ENCODE measurements at regions of chr5 and their contacts with region 1.

Region 1: DNA sequence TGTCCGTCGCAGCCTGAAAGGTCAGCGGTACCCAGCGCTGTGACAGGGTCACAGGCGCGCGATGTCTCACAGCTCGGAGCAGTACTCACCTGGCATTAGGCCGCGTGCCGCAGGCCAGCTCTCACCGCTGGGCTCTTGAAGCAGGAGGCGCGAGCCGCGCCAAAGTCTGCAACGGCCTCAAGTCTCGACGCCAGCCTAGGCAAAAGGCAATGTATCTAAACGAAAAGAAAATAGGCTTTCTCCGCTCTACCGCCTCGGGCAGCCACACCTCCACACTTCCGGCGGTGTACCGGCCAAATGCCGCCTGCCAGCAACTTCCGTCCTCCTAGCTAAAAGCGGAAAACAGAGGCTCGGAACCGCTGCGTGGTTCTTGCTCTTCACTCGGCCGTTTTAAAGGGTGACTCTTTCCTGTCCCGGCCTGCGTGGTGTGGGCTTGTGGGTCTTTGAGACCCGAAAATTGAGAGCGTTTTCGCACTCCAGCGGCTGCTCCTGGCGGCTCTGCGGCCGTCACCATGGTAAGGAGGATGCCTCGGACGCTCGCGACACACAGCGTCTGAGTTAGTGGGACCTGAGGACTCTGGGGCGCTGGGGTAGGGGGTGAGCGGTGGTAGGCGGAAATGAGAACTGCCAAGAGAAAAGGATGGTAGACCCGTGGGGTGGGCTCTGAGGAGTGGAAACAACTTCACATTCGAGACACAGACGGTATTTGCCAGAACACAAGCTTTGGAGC is at the starts of genes GFM2 and NSA2:
- DNase-seq: peak; percentile 96
- ATAC-seq: peak; percentile 91
- H3K4me3 Mint-ChIP-seq: peak within 1 kb of the TSS; percentile 98
- H3K27ac Mint-ChIP-seq: peak within 1 kb of the TSS; percentile 99
- H3K4me1 Mint-ChIP-seq: peaks cover 40% of the 10 kb centered on the region
- H3K27me3 Mint-ChIP-seq: no peaks in the 10 kb centered on the region
- CTCF ChIP-seq: no peak
- total RNA-seq, gene GFM2: 30.1 to 30.5 TPM
- total RNA-seq, gene NSA2: 129 to 142 TPM

Region 2: DNA sequence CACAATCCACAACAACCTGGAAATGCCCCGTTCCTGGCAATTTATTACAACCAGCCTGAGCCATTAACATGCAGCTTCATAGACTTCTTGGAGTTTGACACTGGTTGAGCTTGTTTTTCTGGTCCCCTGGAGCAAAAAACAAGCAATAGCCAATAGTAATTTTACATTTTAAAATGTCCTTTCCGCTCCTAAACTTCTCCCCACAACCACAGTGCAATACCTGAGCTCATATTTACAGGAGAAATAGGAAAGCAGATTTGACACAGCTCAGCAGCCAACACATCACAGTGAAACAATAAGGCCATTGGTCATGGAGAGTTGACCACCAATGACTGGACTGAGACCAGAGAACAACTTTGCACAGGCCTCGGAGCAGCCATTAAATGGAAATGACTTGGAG is 199.6 kb before region 1 on chr5:
- CTCF ChIA-PET with region 1: no interaction called
- POLR2A ChIA-PET with region 1: no interaction called
- intact Hi-C with region 1: no loop called
- DNase-seq: no peak
- ATAC-seq: no peak
- H3K4me3 Mint-ChIP-seq: no peak overlapping the region
- H3K27ac Mint-ChIP-seq: no peak overlapping the region
- H3K4me1 Mint-ChIP-seq: no peaks in the 10 kb centered on the region
- H3K27me3 Mint-ChIP-seq: no peaks in the 10 kb centered on the region
- CTCF ChIP-seq: no peak

Region 3: DNA sequence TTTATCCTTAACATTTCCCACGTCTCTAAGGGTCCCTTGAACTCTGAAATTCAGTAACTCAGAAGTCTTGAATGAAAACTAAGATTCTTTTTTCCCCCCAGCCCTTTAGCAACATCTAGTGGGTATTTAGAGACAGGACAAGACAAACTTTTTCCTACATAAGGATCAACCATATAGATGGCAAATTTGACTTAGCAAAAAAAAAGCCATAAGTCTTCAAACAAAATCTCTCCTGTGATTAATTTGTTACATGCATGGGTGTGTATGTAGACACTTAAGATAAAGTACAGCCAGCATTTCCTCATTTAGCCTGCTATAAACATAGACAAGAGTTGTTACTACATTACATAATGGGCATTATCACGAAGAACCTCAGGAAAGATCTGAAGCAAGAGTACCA is 498.7 kb after region 1 on chr5:
- CTCF ChIA-PET with region 1: interaction called, 3 read pairs
- POLR2A ChIA-PET with region 1: no interaction called
- intact Hi-C with region 1: loop called (anchors 10 kb)
- DNase-seq: no peak
- ATAC-seq: peak; percentile 42
- H3K4me3 Mint-ChIP-seq: no peak overlapping the region
- H3K27ac Mint-ChIP-seq: no peak overlapping the region
- H3K4me1 Mint-ChIP-seq: no peaks in the 10 kb centered on the region
- H3K27me3 Mint-ChIP-seq: no peaks in the 10 kb centered on the region
- CTCF ChIP-seq: peak; percentile 42

Measured in activated CD8-positive, alpha-beta T cell treated with anti-CD3 and anti-CD28 coated beads for 36 hours (primary cell).